ENCODE measurements at regions of chr14 and their contacts with region 1.

Region 1: GRCh38 chr14:61321385-61322010 is at the start of gene PRKCH:
- DNase-seq: peak; percentile 71 to 92 (median 86)
- ATAC-seq: peak; percentile 68
- H3K4me3 ChIP-seq: peak within 1 kb of the TSS; percentile 90 to 94
- H3K4me3 Mint-ChIP-seq: peak within 1 kb of the TSS; percentile 96
- H3K27ac ChIP-seq: peak within 1 kb of the TSS; percentile 86
- H3K27ac Mint-ChIP-seq: peak within 1 kb of the TSS; percentile 95
- H3K4me1 ChIP-seq: peaks cover 29% of the 10 kb centered on the region
- H3K4me1 Mint-ChIP-seq: peaks cover 26% of the 10 kb centered on the region
- H3K27me3 ChIP-seq: no peaks in the 10 kb centered on the region
- H3K27me3 Mint-ChIP-seq: no peaks in the 10 kb centered on the region
- CTCF ChIP-seq: no peak
- total RNA-seq, gene PRKCH: 429 to 433 TPM

Region 2: DNA sequence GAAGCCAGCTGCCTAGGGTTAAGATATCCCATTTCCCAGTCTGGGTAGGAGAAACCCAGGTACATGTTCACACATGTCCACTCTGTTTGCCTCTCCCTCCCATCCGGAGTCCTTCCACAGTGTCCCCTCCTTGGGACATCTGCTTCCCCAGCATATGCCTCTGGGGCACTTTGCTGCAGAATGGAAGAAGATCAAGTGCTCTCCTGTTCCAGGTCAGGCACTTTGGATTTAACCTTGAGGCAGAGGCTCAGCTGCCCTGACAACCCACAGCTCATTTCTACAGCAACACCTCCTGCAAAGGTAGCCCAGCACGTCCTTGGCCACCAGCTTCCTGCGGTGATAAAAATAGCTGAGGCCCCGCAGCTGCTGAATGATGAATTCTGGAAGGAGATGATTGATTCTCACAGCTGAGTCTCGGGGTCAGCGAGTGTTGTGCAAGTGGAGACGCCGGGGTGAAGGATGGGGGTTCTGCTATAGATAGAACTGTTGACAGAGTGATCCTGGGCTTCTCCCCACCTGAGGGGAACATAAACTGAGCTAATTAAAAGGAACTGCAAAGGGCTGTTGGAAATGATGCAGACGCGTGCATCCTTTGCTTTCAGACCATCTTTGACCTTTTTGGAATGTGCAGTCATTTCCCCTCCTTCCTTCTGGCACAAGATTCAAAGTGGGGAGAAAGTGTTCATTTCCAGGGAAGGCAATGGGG is 195.5 kb before region 1 on chr14:
- CTCF ChIA-PET with region 1: no interaction called
- POLR2A ChIA-PET with region 1: no interaction called
- intact Hi-C with region 1: no loop called
- DNase-seq: no peak
- ATAC-seq: no peak
- H3K4me3 ChIP-seq: no peak overlapping the region
- H3K4me3 Mint-ChIP-seq: no peak overlapping the region
- H3K27ac ChIP-seq: no peak overlapping the region
- H3K27ac Mint-ChIP-seq: no peak overlapping the region
- H3K4me1 ChIP-seq: no peaks in the 10 kb centered on the region
- H3K4me1 Mint-ChIP-seq: no peaks in the 10 kb centered on the region
- H3K27me3 ChIP-seq: no peaks in the 10 kb centered on the region
- H3K27me3 Mint-ChIP-seq: peaks cover 22% of the 10 kb centered on the region
- CTCF ChIP-seq: no peak

Region 3: DNA sequence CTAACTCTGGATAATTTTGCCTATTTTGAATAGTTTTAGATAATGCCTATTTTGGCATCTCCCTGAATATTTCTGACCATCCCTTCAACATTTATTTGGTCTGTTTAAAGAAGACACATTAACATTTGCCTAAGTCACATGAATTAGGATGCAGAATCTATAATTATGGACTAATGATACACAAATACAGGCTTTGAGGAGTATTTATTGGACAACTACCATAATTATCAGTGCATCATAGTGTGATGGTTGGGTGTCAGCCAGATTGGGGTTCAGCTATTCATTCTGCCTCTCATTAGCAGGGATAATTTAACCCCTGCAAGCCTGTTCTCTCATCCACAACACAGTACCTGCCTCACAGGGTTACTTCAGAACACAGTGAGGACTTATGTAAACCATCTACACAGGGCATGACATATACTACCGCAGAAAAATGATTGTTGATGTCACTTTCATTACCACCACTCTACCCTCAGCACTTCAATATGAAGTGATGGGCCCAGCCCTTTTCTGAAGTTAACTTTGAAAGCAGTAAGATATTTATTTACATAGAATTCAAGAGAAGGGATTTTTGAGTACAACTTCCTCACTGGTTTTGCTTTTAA is 14.3 kb after region 1 on chr14:
- CTCF ChIA-PET with region 1: interaction called, 24 read pairs
- POLR2A ChIA-PET with region 1: interaction called, 96 read pairs
- intact Hi-C with region 1: loop called (anchors 1 to 2 kb)
- DNase-seq: peak in 4 of 9 experiments; percentile 46 to 87 (median 63)
- ATAC-seq: peak; percentile 62
- H3K4me3 ChIP-seq: peak overlapping the region; percentile 1 to 27
- H3K4me3 Mint-ChIP-seq: peak overlapping the region; percentile 83
- H3K27ac ChIP-seq: peak overlapping the region; percentile 86 to 90
- H3K27ac Mint-ChIP-seq: peak overlapping the region; percentile 98
- H3K4me1 ChIP-seq: peaks cover 89% of the 10 kb centered on the region
- H3K4me1 Mint-ChIP-seq: peaks cover 84% of the 10 kb centered on the region
- H3K27me3 ChIP-seq: no peaks in the 10 kb centered on the region
- H3K27me3 Mint-ChIP-seq: no peaks in the 10 kb centered on the region
- CTCF ChIP-seq: no peak

Region 4: GRCh38 chr14:61347826-61348443 is 26.4 kb after region 1 on chr14:
- CTCF ChIA-PET with region 1: interaction called, 15 read pairs
- POLR2A ChIA-PET with region 1: interaction called, 38 read pairs
- intact Hi-C with region 1: no loop called
- DNase-seq: peak in 2 of 9 experiments; percentile 46 to 62
- ATAC-seq: no peak
- H3K4me3 ChIP-seq: peak overlapping the region; percentile 21 to 25
- H3K4me3 Mint-ChIP-seq: peak overlapping the region; percentile 82
- H3K27ac ChIP-seq: peak overlapping the region; percentile 36 to 77
- H3K27ac Mint-ChIP-seq: peak overlapping the region; percentile 99
- H3K4me1 ChIP-seq: peaks cover 98% of the 10 kb centered on the region
- H3K4me1 Mint-ChIP-seq: peaks cover 98% of the 10 kb centered on the region
- H3K27me3 ChIP-seq: no peaks in the 10 kb centered on the region
- H3K27me3 Mint-ChIP-seq: no peaks in the 10 kb centered on the region
- CTCF ChIP-seq: no peak

Region 5: GRCh38 chr14:61395115-61395725 is 73.7 kb after region 1 on chr14:
- CTCF ChIA-PET with region 1: interaction called, 23 read pairs
- POLR2A ChIA-PET with region 1: interaction called, 20 read pairs
- intact Hi-C with region 1: loop called in 1 of 2 experiments (anchors 2 kb)
- DNase-seq: peak in 4 of 9 experiments; percentile 23 to 57 (median 38)
- ATAC-seq: peak; percentile 20
- H3K4me3 ChIP-seq: no peak overlapping the region
- H3K4me3 Mint-ChIP-seq: peak overlapping the region; percentile 59
- H3K27ac ChIP-seq: peak overlapping the region in 1 of 2 experiments; percentile 49
- H3K27ac Mint-ChIP-seq: peak overlapping the region; percentile 90
- H3K4me1 ChIP-seq: peaks cover 98% of the 10 kb centered on the region
- H3K4me1 Mint-ChIP-seq: no peaks in the 10 kb centered on the region
- H3K27me3 ChIP-seq: no peaks in the 10 kb centered on the region
- H3K27me3 Mint-ChIP-seq: no peaks in the 10 kb centered on the region
- CTCF ChIP-seq: no peak

Region 6: GRCh38 chr14:61444215-61444768 is 122.8 kb after region 1 on chr14:
- CTCF ChIA-PET with region 1: no interaction called
- POLR2A ChIA-PET with region 1: interaction called, 4 read pairs
- intact Hi-C with region 1: loop called in 1 of 2 experiments (anchors 5 kb)
- DNase-seq: peak in 8 of 9 experiments; percentile 54 to 89 (median 71)
- ATAC-seq: peak; percentile 83
- H3K4me3 ChIP-seq: no peak overlapping the region
- H3K4me3 Mint-ChIP-seq: peak overlapping the region; percentile 77
- H3K27ac ChIP-seq: peak overlapping the region; percentile 28 to 81
- H3K27ac Mint-ChIP-seq: peak overlapping the region; percentile 94
- H3K4me1 ChIP-seq: peaks cover 95% of the 10 kb centered on the region
- H3K4me1 Mint-ChIP-seq: peaks cover 96% of the 10 kb centered on the region
- H3K27me3 ChIP-seq: no peaks in the 10 kb centered on the region
- H3K27me3 Mint-ChIP-seq: no peaks in the 10 kb centered on the region
- CTCF ChIP-seq: no peak

Region 7: DNA sequence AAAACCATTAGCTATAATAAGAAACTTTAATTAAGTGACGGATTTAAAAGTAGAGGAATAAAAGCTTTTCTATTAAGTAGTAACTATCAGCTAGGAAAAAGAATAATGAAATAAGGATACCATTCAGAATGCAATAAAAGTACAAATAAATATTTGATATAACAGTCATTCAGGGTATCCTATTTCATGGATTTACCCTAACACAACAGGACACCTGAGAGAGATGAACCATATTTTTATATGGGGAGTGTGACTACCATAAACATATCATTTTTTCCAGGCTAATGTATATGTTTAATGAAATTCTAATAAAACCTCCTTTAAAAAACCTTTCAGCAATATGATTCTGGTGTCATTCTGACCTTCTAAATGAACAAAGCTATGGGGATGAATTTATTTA is 834.6 kb after region 1 on chr14:
- CTCF ChIA-PET with region 1: no interaction called
- POLR2A ChIA-PET with region 1: no interaction called
- intact Hi-C with region 1: no loop called
- DNase-seq: no peak
- ATAC-seq: no peak
- H3K4me3 ChIP-seq: no peak overlapping the region
- H3K4me3 Mint-ChIP-seq: no peak overlapping the region
- H3K27ac ChIP-seq: no peak overlapping the region
- H3K27ac Mint-ChIP-seq: no peak overlapping the region
- H3K4me1 ChIP-seq: no peaks in the 10 kb centered on the region
- H3K4me1 Mint-ChIP-seq: no peaks in the 10 kb centered on the region
- H3K27me3 ChIP-seq: peaks cover 1 to 2% of the 10 kb centered on the region in 2 experiments
- H3K27me3 Mint-ChIP-seq: peaks cover 13% of the 10 kb centered on the region
- CTCF ChIP-seq: no peak

Measured in CD8-positive, alpha-beta T cell (primary cell).